ENCODE measurements at regions of chr4 and their contacts with region 1.

Region 1: DNA sequence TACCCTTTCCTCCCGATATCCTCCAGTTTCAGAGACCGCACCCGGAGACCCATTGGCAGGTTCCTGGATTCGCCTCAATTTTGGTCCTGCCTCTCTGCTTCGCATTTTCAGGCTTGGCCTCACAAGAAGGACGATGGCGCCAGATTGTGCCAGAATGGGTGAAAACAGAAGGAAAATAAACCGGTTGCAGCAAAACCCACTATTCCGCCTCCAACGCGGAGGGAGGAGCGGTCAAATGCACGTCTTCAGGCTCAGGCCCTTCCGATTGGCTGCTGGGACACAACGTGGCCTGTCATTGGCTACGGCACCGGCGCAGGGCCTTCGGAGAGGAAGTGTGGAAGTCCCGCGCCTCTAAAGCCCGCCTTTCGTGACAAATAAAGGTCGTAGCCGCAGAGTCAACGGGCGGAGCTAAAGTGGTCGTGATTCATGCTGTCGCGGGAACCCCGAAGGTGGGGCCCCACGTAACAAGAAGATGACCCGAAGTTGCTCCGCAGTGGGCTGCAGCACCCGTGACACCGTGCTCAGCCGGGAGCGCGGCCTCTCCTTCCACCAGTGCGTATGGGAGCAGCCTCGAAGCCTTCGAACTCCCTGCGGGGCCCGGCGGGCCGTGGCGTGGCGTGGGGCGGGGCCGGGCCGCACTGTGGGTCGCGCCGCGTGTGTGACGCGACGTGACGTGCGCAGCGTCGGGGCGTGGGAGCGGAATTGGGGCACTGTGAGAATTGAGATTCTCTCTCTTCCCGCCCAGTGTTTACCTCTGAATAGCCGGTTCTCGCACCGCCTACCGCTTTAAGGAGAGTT is at the start of gene THAP9:
- DNase-seq: peak; percentile 99
- ATAC-seq: peak; percentile 92
- H3K4me3 Mint-ChIP-seq: no peak within 1 kb of the TSS
- H3K27ac Mint-ChIP-seq: no peak within 1 kb of the TSS
- H3K4me1 Mint-ChIP-seq: peaks cover 39% of the 10 kb centered on the region
- H3K27me3 Mint-ChIP-seq: no peaks in the 10 kb centered on the region
- total RNA-seq, gene THAP9: 1.7 to 2.6 TPM

Region 2: GRCh38 chr4:82284858-82285805 is 615.4 kb before region 1 on chr4:
- CTCF ChIA-PET with region 1: no interaction called
- POLR2A ChIA-PET with region 1: no interaction called
- intact Hi-C with region 1: loop called in 1 of 2 experiments (anchors 1 kb)
- DNase-seq: peak; percentile 100
- ATAC-seq: peak; percentile 99
- H3K4me3 Mint-ChIP-seq: peak overlapping the region; percentile 68
- H3K27ac Mint-ChIP-seq: peak overlapping the region; percentile 62
- H3K4me1 Mint-ChIP-seq: peaks cover 13% of the 10 kb centered on the region
- H3K27me3 Mint-ChIP-seq: no peaks in the 10 kb centered on the region

Region 3: GRCh38 chr4:82500106-82500965 is 400.2 kb before region 1 on chr4:
- CTCF ChIA-PET with region 1: no interaction called
- POLR2A ChIA-PET with region 1: no interaction called
- intact Hi-C with region 1: no loop called
- DNase-seq: no peak
- ATAC-seq: no peak
- H3K4me3 Mint-ChIP-seq: no peak overlapping the region
- H3K27ac Mint-ChIP-seq: no peak overlapping the region
- H3K4me1 Mint-ChIP-seq: no peaks in the 10 kb centered on the region
- H3K27me3 Mint-ChIP-seq: no peaks in the 10 kb centered on the region

Region 4: GRCh38 chr4:82865592-82865991 is 34.9 kb before region 1 on chr4:
- CTCF ChIA-PET with region 1: interaction called, 4 read pairs
- POLR2A ChIA-PET with region 1: interaction called, 5 read pairs
- intact Hi-C with region 1: loop called (anchors 1 to 2 kb)
- DNase-seq: peak; percentile 18
- ATAC-seq: peak; percentile 71
- H3K4me3 Mint-ChIP-seq: no peak overlapping the region
- H3K27ac Mint-ChIP-seq: peak overlapping the region; percentile 69
- H3K4me1 Mint-ChIP-seq: peaks cover 27% of the 10 kb centered on the region
- H3K27me3 Mint-ChIP-seq: no peaks in the 10 kb centered on the region

Region 5: GRCh38 chr4:83074086-83074704 is 173.7 kb after region 1 on chr4:
- CTCF ChIA-PET with region 1: interaction called, 3 read pairs
- POLR2A ChIA-PET with region 1: no interaction called
- intact Hi-C with region 1: loop called in 1 of 2 experiments (anchors 1 kb)
- DNase-seq: peak; percentile 63
- ATAC-seq: peak; percentile 91
- H3K4me3 Mint-ChIP-seq: peak overlapping the region; percentile 25
- H3K27ac Mint-ChIP-seq: no peak overlapping the region
- H3K4me1 Mint-ChIP-seq: peaks cover 13% of the 10 kb centered on the region
- H3K27me3 Mint-ChIP-seq: no peaks in the 10 kb centered on the region

Region 6: DNA sequence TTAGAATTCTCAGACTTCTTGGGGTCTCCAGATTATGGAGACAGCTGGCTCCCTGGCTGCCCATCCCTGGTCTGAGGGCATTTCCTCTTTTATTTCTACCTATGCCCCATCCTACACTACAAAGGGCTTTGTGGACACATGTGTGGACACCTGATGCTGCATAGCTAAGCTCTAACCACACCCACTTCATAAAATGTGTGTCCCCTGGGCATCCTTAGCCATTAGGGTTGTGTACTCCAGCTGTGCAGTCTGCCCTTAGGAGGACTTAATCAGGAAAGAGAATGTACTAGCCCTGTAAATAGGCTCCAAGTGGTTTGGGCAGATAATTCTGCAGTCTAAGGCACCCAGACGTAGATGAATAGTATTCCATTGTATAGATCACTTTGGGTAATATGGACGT is 337.1 kb after region 1 on chr4:
- CTCF ChIA-PET with region 1: no interaction called
- POLR2A ChIA-PET with region 1: no interaction called
- intact Hi-C with region 1: loop called in 1 of 2 experiments (anchors 1 kb)
- DNase-seq: no peak
- ATAC-seq: no peak
- H3K4me3 Mint-ChIP-seq: no peak overlapping the region
- H3K27ac Mint-ChIP-seq: no peak overlapping the region
- H3K4me1 Mint-ChIP-seq: peaks cover 42% of the 10 kb centered on the region
- H3K27me3 Mint-ChIP-seq: peaks cover 25% of the 10 kb centered on the region

Region 7: GRCh38 chr4:83484500-83485461 is 584.3 kb after region 1 on chr4 and contains the start of gene ABRAXAS1:
- CTCF ChIA-PET with region 1: no interaction called
- POLR2A ChIA-PET with region 1: no interaction called
- intact Hi-C with region 1: loop called in 1 of 2 experiments (anchors 10 kb)
- DNase-seq: peak; percentile 97
- ATAC-seq: peak; percentile 95
- H3K4me3 Mint-ChIP-seq: peak within 1 kb of the TSS; percentile 91
- H3K27ac Mint-ChIP-seq: peak within 1 kb of the TSS; percentile 94
- H3K4me1 Mint-ChIP-seq: peaks cover 10% of the 10 kb centered on the region
- H3K27me3 Mint-ChIP-seq: no peaks in the 10 kb centered on the region
- total RNA-seq, gene ABRAXAS1: 19.2 to 22.6 TPM

Measured in activated CD4-positive, alpha-beta T cell treated with anti-CD3 and anti-CD28 coated beads for 36 hours (primary cell).